Panc1 (cell line): ENCODE measurements at regions of chr17 and their contacts with region 1.

Region 1: DNA sequence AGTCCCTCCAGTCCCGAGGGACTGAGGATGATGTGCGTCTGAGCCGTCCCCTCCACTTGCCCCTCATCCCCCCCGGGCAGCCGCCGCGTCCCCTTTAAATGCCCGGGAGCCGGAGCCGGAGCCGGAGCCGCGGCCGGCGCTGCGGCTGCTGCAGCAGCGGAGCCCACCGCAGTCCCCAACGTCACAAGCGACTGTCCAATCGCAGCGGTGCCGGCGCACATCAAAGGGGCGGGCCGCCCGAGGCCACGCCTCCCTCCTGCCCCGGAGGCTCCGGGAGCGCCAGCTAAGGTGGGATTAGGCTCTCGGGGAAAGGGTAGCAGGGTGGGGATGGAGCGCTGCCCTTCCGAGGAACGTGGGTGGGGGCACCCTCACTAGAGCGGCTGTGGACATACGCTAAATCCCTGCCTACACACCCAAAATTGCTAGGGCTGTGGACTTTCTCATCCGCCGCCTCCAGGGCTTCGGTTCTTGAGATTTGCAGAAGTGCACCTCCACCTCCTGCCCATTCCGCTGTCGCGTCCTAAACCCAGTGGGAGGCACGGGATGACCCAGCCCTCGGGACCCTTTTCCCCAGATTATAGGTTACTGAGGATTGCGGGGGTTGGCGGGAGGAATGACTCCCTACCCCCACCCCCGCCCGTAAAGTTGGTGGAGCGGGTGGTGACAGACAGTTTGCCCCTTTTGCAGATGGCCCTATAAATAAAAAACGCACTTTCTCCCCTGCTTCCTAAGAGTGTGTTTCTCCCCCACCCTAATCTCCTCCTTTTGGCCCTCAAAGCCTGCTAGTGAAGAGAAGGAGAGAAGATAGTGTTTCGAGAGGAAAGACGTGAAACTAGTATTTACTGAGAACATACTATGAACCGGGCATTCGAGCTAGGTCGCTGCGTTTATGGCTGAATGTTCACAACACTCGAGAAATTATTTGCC is at the start of gene PHOSPHO1:
- DNase-seq: no peak
- ATAC-seq: peak; percentile 95
- H3K4me3 ChIP-seq: peak within 1 kb of the TSS; percentile 61 to 86
- H3K27ac ChIP-seq: no peak within 1 kb of the TSS; the same call in 1 of the 2 replicates
- H3K4me1 ChIP-seq: peaks cover 10% of the 10 kb centered on the region
- H3K27me3 ChIP-seq: peaks cover 5% of the 10 kb centered on the region; the same call in 1 of the 2 replicates
- CTCF ChIP-seq: no peak
- total RNA-seq, gene PHOSPHO1: 0.54 TPM

Region 2: GRCh38 chr17:49053171-49053829 is 177.6 kb before region 1 on chr17:
- CTCF ChIA-PET with region 1: no interaction called
- POLR2A ChIA-PET with region 1: no interaction called
- in situ Hi-C with region 1: no loop called
- intact Hi-C with region 1: loop called (anchors 10 kb)
- DNase-seq: no peak
- ATAC-seq: peak; percentile 27; the same call in 1 of the 2 replicates
- H3K4me3 ChIP-seq: no peak overlapping the region
- H3K27ac ChIP-seq: no peak overlapping the region
- H3K4me1 ChIP-seq: no peaks in the 10 kb centered on the region
- H3K27me3 ChIP-seq: no peaks in the 10 kb centered on the region
- CTCF ChIP-seq: no peak

Region 3: DNA sequence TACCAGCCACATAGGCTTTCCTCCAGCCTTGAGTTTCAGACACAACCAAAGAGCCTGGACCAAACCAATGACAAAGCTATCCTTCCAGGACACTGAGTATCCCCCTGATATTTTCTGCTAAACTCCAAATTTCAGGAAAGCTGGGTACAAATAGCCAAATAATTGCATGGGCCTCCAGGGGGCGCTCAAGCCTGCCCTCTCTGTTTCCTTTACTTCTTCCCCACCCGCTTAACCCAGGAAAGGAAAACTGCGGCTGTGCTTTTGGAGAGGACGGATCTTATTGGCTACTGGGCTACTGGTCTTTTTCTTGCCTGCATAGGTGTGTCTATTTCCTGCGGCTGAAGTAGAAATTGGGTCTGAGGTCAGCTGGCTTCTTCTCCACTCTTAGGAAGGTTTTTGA is 50.6 kb before region 1 on chr17:
- CTCF ChIA-PET with region 1: interaction called, 5 read pairs
- POLR2A ChIA-PET with region 1: no interaction called
- in situ Hi-C with region 1: no loop called
- intact Hi-C with region 1: loop called (anchors 2 kb)
- DNase-seq: peak; percentile 28
- ATAC-seq: peak; percentile 83
- H3K4me3 ChIP-seq: no peak overlapping the region
- H3K27ac ChIP-seq: no peak overlapping the region
- H3K4me1 ChIP-seq: no peaks in the 10 kb centered on the region; the same call in 1 of the 2 replicates
- H3K27me3 ChIP-seq: no peaks in the 10 kb centered on the region
- CTCF ChIP-seq: peak; percentile 99

Region 4: GRCh38 chr17:49210158-49211029 is 20.5 kb before region 1 on chr17 and contains the starts of genes ABI3 and GNGT2:
- CTCF ChIA-PET with region 1: interaction called, 11 read pairs
- POLR2A ChIA-PET with region 1: no interaction called
- in situ Hi-C with region 1: no loop called
- intact Hi-C with region 1: no loop called
- DNase-seq: no peak
- ATAC-seq: no peak
- H3K4me3 ChIP-seq: no peak within 1 kb of the TSS
- H3K27ac ChIP-seq: no peak within 1 kb of the TSS
- H3K4me1 ChIP-seq: no peaks in the 10 kb centered on the region
- H3K27me3 ChIP-seq: peaks cover 9% of the 10 kb centered on the region; the same call in 1 of the 2 replicates
- CTCF ChIP-seq: no peak
- total RNA-seq, gene ABI3: not detected
- total RNA-seq, gene GNGT2: not detected

Region 5: GRCh38 chr17:49241692-49242397 is 10.9 kb after region 1 on chr17:
- CTCF ChIA-PET with region 1: no interaction called
- POLR2A ChIA-PET with region 1: no interaction called
- in situ Hi-C with region 1: no loop called
- intact Hi-C with region 1: no loop called
- DNase-seq: no peak
- ATAC-seq: no peak; the same call in 1 of the 2 replicates
- H3K4me3 ChIP-seq: no peak overlapping the region
- H3K27ac ChIP-seq: no peak overlapping the region
- H3K4me1 ChIP-seq: no peaks in the 10 kb centered on the region
- H3K27me3 ChIP-seq: no peaks in the 10 kb centered on the region
- CTCF ChIP-seq: no peak

Region 6: DNA sequence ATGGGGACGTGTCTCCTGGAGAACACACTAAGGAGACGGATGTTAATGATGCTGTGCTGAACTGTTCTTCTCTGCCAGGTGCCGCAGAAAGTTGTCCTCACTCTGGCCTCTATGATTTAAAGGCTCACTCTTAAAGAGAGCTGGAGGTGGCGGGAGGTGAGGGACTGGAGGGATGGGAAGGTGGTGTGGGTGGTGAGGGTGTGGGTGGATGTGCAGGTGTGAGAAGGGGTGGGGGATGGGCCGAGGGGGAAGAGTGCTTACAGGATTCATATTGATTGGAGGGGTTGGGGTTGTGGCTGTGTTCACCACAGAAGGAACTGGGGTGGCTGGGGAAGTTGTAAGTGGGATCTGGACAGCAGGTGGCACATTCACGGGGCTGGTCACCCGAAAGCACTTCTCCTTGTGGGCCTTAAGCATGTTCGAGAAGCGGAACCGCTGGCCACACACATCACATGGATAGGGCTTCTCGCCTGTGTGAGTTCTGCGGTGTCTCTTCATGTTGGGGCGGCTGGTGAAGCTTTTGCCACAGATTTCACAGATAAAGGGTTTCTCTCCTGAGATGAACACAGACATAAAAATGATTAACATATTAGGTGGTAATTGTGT is 67.6 kb after region 1 on chr17:
- CTCF ChIA-PET with region 1: no interaction called
- POLR2A ChIA-PET with region 1: no interaction called
- in situ Hi-C with region 1: no loop called
- intact Hi-C with region 1: loop called (anchors 2 kb)
- DNase-seq: no peak
- ATAC-seq: no peak
- H3K4me3 ChIP-seq: no peak overlapping the region
- H3K27ac ChIP-seq: no peak overlapping the region
- H3K4me1 ChIP-seq: no peaks in the 10 kb centered on the region
- H3K27me3 ChIP-seq: no peaks in the 10 kb centered on the region
- CTCF ChIP-seq: no peak